ENCODE measurements at regions of chr14 and their contacts with region 1.

Region 1: GRCh38 chr14:24431569-24432258 is 2.0 kb downstream of the KHNYN start:
- DNase-seq: peak; percentile 95

Region 2: DNA sequence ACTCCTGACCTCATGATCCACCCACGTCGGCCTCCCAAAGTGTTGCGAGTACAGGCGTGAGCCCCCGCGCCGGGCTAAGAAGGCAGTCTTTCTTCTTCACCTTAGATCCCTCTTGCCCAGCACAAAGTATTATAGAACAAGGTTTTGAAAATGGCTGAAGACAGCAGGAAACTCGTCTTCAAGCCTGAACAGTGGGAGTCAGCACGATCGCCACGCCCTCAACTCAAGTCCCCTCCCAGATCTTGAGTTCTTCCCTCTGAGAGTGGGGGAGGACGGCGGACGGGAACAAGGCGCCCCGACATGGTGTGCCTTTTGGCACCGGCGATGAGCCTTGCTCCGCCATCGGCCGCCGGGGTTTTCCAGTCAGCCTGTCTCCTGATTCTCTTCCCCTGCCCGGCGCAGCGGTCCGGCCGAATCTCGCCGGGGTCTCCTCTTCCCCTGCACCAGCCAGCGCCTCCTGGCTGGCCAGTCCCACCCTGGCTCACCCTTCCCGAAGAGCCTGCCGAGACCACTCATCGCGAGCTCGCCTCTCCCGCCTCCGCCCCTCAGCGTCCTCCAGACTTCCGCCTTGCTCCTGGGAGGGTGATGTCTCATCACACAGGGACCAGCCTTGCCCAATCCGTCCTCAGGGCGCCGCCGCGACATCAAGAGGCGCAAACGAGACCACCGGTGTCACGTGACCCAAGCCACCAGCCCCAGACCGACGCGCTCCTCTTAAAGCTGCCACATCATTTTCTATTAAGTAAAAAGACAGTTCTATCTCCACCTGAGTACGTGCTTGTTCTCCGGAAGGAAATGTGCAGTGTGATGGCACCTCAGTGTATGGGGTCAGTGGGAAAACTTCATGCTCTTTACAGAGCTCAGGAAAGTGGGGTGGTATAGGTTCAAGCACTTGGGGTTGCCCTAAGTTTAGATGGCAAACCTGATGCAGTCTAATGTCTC is 218.5 kb before region 1 on chr14 and contains the start of gene CHMP4A:
- intact Hi-C with region 1: no loop called
- DNase-seq: peak; percentile 96
- total RNA-seq, gene CHMP4A: 30.0 TPM

Region 3: DNA sequence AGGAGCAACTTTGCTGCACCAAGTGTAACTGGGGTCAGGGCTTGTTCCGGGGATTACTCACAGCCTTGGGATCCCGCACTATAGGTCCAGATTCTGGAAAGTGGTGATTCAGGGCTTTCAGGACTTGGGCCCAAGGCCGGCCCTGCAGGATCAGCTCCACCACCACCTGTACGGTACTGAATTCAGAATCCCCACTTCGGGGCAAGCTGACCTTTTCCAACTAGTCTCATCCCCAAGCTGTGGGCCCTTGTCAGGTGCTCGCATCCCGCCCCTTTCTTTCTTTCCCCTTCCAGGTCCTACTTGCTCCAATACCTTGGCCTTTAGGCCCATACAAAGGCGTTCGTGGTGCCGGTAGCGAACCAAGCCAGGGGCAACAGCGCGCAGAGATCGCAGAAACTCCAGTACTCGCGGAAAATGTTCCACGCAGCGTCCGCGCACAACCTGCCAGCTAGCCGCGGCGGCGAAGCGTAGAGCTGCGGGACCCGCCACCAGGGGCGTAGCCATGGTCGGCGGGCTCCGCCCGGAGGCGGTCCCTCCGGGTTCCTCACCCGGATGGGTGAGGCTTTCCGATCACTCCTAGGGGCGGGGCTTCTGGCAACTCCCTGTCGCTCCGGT is 189.8 kb before region 1 on chr14:
- intact Hi-C with region 1: loop called (anchors 5 kb)
- DNase-seq: peak; percentile 97

Region 4: DNA sequence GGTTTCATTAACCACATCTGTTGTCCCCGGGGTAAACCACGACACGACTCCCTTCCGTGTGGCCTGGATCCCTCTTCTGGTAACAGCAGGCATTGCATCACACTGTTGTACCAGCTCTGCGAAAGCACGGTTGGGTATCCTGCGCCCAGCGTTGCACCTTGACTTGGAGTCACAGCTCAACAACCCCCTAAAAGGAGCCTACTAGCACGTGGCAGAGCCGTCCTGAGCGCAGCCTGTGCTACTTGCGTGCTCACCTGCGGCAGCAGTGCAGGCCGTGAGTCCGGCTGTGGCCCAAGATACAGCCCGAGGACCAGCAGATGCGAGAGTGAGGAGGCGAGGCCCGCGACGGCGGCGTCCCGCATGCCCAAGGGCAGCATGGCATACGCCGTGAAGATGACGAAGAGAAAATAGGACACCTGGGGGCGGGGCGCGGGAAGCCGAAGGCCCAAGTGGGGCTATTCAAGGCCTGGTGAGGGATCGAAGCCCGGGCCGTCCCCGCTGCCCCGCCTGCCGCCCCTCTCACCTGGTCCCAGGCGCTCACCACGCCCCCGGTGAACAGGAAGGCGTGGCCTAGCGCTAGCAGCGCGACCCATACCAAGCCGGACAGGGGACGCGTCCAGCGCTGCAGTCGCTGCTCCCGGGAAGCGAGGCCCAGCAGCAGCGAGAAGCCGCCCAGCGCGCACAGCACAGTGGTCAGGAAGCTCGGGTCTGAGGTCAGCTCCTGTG is 99.3 kb before region 1 on chr14:
- intact Hi-C with region 1: loop called (anchors 1 kb)
- DNase-seq: no peak

Region 5: GRCh38 chr14:24366721-24367513 is 64.8 kb before region 1 on chr14:
- intact Hi-C with region 1: loop called (anchors 1 kb)
- DNase-seq: peak; percentile 90